Endothelial cell of umbilical vein (primary cell): ENCODE measurements at regions of chr6 and their contacts with region 1.

Region 1: DNA sequence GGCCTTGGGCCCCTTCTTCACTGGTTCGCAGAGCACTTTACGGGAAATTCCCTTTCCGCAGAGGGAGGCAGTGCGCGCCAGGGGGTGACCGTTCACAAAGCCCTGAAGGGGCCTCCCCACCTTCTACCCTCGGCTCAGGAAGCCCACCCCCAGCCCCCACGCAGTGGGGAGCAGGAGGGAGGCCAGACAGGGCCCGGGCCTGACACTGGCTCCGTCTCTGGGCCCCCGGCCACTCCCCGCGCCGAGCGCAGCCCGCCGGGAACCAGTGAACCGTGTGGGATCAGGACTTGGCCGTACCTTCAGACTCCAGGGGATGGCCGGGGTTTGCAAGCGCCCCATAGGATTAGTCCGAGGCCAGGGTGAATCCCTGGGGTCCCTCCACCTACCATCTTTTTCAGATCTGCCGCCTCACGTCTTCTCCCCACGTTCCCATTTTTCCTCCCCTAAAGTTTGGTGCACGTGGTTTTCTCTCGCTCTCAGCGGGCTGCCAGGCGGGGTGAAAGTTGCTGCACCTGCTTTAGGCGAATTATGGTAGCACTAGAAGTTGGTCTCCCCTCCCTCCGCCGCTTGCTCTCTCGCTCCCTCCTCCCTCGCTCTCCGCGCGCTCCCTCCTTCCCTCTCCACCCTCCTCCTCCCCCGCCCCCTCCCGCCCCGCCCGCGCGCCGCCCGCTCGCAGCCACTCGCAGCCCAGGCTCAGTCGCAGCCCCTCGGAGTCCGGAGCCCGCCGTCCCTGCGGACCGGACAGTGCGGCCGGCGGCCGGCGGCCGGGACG is at the start of gene FOXP4:
- DNase-seq: peak; percentile 89
- H3K4me3 ChIP-seq: peak within 1 kb of the TSS; percentile 68 to 94 (median 80)
- H3K27ac ChIP-seq: peak within 1 kb of the TSS; percentile 22
- H3K4me1 ChIP-seq: peaks cover 14% of the 10 kb centered on the region
- H3K27me3 ChIP-seq: peaks cover 0 to 3% of the 10 kb centered on the region in 2 experiments
- CTCF ChIP-seq: no peak
- POLR2A ChIP-seq: no peak
- total RNA-seq, gene FOXP4: 23.9 and 24.4 TPM in 2 replicates

Region 2: GRCh38 chr6:41503841-41504465 is 41.9 kb before region 1 on chr6:
- CTCF ChIA-PET with region 1: no interaction called
- POLR2A ChIA-PET with region 1: no interaction called
- dilution Hi-C with region 1: no loop called
- intact Hi-C with region 1: loop called (anchors 1 kb)
- DNase-seq: peak; percentile 50
- H3K4me3 ChIP-seq: peak overlapping the region in 1 of 3 experiments; percentile 12
- H3K27ac ChIP-seq: no peak overlapping the region
- H3K4me1 ChIP-seq: peaks cover 12% of the 10 kb centered on the region
- H3K27me3 ChIP-seq: peaks cover 14 to 32% of the 10 kb centered on the region in 2 experiments
- CTCF ChIP-seq: no peak
- POLR2A ChIP-seq: no peak

Region 3: DNA sequence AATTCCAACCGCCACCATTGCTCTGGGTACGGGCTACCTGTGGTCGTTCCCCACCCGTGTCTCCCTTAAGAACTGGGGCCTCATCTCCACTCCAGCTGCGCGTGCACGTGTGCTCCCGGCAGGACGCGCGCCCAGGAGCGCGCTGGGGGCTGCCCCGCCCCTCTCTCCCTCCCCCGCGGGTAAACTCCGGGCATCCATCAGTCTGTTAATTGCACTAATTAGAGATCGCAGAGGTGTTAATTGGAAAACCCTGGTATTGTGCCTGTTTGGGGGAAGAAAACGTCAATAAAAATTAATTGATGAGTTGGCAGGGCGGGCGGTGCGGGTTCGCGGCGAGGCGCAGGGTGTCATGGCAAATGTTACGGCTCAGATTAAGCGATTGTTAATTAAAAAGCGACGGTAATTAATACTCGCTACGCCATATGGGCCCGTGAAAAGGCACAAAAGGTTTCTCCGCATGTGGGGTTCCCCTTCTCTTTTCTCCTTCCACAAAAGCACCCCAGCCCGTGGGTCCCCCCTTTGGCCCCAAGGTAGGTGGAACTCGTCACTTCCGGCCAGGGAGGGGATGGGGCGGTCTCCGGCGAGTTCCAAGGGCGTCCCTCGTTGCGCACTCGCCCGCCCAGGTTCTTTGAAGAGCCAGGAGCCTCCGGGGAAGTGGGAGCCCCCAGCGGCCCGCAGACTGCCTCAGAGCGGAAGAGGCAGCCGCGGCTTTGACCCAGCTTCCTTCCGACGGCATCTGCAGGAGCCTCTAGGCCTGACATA is 14.7 kb after region 1 on chr6:
- CTCF ChIA-PET with region 1: interaction called, 3 read pairs
- POLR2A ChIA-PET with region 1: no interaction called
- dilution Hi-C with region 1: no loop called
- intact Hi-C with region 1: loop called (anchors 1 kb)
- DNase-seq: peak; percentile 22
- H3K4me3 ChIP-seq: peak overlapping the region; percentile 1 to 23 (median 9)
- H3K27ac ChIP-seq: no peak overlapping the region
- H3K4me1 ChIP-seq: peaks cover 8% of the 10 kb centered on the region
- H3K27me3 ChIP-seq: no peaks in the 10 kb centered on the region
- CTCF ChIP-seq: no peak
- POLR2A ChIP-seq: no peak

Region 4: DNA sequence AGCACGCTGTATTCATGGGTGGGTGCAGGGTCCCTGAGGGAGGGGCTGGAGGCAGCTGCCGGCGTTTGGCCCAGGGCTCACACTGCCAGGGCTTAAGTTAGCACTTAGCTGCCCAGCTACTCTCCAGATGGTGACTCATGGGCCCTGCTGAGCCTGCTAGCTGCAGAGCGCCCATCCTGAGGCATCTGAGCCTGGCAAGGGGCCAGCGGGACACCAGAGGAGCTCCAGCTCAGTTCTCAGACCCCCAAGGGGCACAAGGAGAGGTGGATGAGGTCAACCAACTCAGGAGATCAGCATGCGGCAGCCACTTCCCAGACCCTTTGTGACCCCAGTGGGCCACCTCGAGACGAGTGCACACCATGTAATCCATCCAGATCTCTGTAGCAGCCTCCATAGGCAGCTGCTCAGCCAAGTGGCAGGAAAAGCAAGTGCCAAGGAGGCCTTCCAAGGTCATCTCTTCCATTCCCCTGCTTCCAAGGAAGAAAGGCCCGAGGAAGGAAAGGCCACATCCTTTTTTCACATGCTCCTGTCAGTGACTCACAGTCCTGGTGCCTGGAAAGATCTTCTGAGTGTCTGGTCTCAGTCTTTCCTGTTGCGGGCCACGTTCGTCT is 35.6 kb after region 1 on chr6:
- CTCF ChIA-PET with region 1: interaction called, 4 read pairs
- POLR2A ChIA-PET with region 1: no interaction called
- dilution Hi-C with region 1: no loop called
- intact Hi-C with region 1: loop called (anchors 1 kb)
- DNase-seq: peak; percentile 85
- H3K4me3 ChIP-seq: no peak overlapping the region
- H3K27ac ChIP-seq: peak overlapping the region; percentile 36
- H3K4me1 ChIP-seq: peaks cover 35% of the 10 kb centered on the region
- H3K27me3 ChIP-seq: no peaks in the 10 kb centered on the region
- CTCF ChIP-seq: no peak
- POLR2A ChIP-seq: no peak

Region 5: DNA sequence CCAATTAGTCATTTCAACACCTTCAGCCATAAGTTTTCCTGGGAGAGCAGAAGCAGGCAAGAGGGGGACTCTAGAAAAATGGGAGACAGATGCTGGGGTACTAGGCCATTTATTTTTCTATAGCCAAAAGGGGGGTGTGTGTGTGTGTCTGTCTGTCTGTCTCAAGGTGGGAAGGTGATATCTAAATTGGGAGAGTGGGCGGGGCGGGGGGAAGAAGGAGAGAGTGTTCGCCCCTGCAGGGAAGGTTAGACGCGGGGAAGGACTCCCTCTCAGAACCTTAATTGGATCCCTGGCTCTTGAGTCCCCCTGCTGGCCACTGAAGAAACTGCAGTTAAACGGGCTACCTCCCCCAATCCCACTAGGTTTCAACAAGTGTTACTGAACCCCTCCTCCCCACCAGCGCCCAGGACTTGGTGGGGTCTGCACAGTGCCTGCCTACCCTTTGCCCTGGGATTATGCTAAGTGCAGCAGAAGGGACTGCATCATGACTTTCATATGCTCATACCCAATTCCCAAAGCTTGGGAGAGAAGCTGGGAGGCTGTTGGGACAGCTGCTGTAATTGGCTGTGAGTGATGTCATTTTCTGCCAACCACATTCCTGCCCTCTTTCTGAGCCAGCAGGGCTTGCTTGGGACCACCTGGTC is 46.1 kb after region 1 on chr6:
- CTCF ChIA-PET with region 1: interaction called, 3 read pairs
- POLR2A ChIA-PET with region 1: interaction called, 3 read pairs
- dilution Hi-C with region 1: no loop called
- intact Hi-C with region 1: loop called (anchors 1 kb)
- DNase-seq: peak; percentile 73
- H3K4me3 ChIP-seq: no peak overlapping the region
- H3K27ac ChIP-seq: no peak overlapping the region
- H3K4me1 ChIP-seq: no peaks in the 10 kb centered on the region
- H3K27me3 ChIP-seq: no peaks in the 10 kb centered on the region
- CTCF ChIP-seq: peak; percentile 89 to 93
- POLR2A ChIP-seq: no peak